Endothelial cell of umbilical vein (primary cell): ENCODE measurements at regions of chr6 and their contacts with region 1.

Region 1: DNA sequence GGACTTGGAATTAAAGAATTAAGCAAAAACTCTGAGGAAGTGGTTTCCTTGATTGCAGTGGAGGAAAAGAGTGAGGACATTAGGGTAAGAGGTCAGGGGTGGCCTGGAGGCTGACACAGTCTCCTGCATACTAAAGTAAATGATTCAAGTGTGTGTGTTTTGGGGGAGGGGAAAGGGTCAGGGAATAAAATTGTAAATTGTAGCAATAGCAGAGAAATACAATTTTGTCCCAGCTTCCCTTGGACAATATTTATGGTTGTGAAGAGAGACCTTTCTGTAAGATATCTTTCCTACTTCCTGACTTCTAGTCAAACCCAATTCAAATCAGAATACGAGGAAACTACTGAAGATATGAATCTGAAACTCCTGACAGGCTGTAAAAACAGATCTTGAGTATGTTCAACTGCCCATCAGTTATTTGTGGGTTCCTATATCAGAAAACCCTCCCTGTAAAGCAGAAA is 143.4 kb upstream of the HMGN3 start:
- DNase-seq: peak; percentile 93
- H3K4me3 ChIP-seq: peak overlapping the region in 1 of 3 experiments; percentile 47
- H3K27ac ChIP-seq: peak overlapping the region; percentile 78
- H3K4me1 ChIP-seq: peaks cover 42% of the 10 kb centered on the region
- H3K27me3 ChIP-seq: no peaks in the 10 kb centered on the region
- CTCF ChIP-seq: no peak
- POLR2A ChIP-seq: peak; percentile 50

Region 2: GRCh38 chr6:79421707-79422484 is 44.0 kb after region 1 on chr6:
- CTCF ChIA-PET with region 1: no interaction called
- POLR2A ChIA-PET with region 1: no interaction called
- dilution Hi-C with region 1: no loop called
- intact Hi-C with region 1: loop called (anchors 2 kb)
- DNase-seq: peak; percentile 99
- H3K4me3 ChIP-seq: no peak overlapping the region
- H3K27ac ChIP-seq: peak overlapping the region; percentile 24
- H3K4me1 ChIP-seq: peaks cover 17% of the 10 kb centered on the region
- H3K27me3 ChIP-seq: no peaks in the 10 kb centered on the region
- CTCF ChIP-seq: no peak
- POLR2A ChIP-seq: no peak